ENCODE measurements at regions of chr5 and their contacts with region 1.

Region 1: GRCh38 chr5:111530298-111530740 is 18.0 kb upstream of the STARD4 start:
- DNase-seq: peak; percentile 22
- ATAC-seq: peak; percentile 55; the same call in 1 of the 2 replicates
- H3K4me3 ChIP-seq: no peak overlapping the region
- H3K27ac ChIP-seq: no peak overlapping the region
- H3K4me1 ChIP-seq: peaks cover 6% of the 10 kb centered on the region; the same call in 1 of the 2 replicates
- H3K27me3 ChIP-seq: 0 out of 2 replicates have a peak, but pooled peaks cover 4% of the 10 kb centered on the region
- CTCF ChIP-seq: no peak

Region 2: GRCh38 chr5:111367081-111367480 is 163.2 kb before region 1 on chr5:
- CTCF ChIA-PET with region 1: no interaction called
- POLR2A ChIA-PET with region 1: no interaction called
- intact Hi-C with region 1: no loop called
- DNase-seq: peak; percentile 68
- ATAC-seq: peak; percentile 92
- H3K4me3 ChIP-seq: no peak overlapping the region
- H3K27ac ChIP-seq: no peak overlapping the region
- H3K4me1 ChIP-seq: 0 out of 2 replicates have a peak, but pooled peaks cover 7% of the 10 kb centered on the region
- H3K27me3 ChIP-seq: peaks cover 20% of the 10 kb centered on the region; the same call in 1 of the 2 replicates
- CTCF ChIP-seq: no peak

Region 3: GRCh38 chr5:111486055-111486454 is 44.3 kb before region 1 on chr5:
- CTCF ChIA-PET with region 1: no interaction called
- POLR2A ChIA-PET with region 1: no interaction called
- intact Hi-C with region 1: no loop called
- DNase-seq: no peak
- ATAC-seq: no peak
- H3K4me3 ChIP-seq: no peak overlapping the region
- H3K27ac ChIP-seq: no peak overlapping the region
- H3K4me1 ChIP-seq: no peaks in the 10 kb centered on the region
- H3K27me3 ChIP-seq: no peaks in the 10 kb centered on the region
- CTCF ChIP-seq: no peak

Region 4: DNA sequence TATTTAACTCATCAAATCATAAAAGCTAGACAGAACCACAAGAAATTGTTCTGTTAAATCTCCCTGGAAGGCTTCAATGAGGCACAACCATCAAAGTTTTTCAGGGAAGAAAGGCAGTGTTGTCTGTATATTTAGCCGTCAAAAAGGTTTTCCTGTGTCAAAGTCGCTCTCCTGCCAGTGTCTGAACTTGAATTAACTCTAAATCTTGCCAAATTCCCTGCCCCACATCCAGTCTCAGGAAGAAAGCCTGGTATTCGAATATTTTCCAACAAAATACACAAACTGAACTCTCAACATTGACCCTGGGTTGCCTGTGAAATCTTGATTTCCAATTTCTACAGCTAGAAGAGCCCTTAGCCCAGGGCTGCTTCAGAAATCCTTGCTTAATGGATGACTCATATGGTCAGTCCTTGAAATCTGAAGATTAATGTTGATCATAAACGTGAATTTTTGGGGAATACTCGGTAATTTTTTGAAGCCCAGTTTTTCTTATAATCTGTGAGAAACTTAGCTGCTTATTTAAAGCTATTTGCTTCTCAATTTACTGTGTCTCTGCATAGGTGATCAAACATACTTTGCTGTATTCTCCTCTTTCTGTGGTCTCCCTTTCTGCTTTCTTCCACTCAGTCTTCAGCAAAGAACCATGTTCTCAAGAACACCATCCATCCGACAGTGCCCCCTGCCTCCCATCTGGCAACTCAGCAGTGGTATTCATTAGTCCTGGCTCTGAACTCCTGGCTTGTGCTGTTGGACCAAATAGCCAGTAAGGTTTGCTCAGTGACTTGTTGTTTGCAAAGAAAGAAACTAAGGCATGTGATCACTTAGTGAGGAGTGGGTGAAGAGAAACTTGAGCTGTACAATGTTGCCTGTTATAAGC is 167.8 kb after region 1 on chr5:
- CTCF ChIA-PET with region 1: interaction called, 10 read pairs
- POLR2A ChIA-PET with region 1: no interaction called
- intact Hi-C with region 1: no loop called
- DNase-seq: peak; percentile 18
- ATAC-seq: no peak
- H3K4me3 ChIP-seq: no peak overlapping the region
- H3K27ac ChIP-seq: no peak overlapping the region
- H3K4me1 ChIP-seq: peaks cover 32% of the 10 kb centered on the region
- H3K27me3 ChIP-seq: no peaks in the 10 kb centered on the region
- CTCF ChIP-seq: 0 out of 2 replicates have a peak, but pooled peaks have one; percentile 21

Region 5: DNA sequence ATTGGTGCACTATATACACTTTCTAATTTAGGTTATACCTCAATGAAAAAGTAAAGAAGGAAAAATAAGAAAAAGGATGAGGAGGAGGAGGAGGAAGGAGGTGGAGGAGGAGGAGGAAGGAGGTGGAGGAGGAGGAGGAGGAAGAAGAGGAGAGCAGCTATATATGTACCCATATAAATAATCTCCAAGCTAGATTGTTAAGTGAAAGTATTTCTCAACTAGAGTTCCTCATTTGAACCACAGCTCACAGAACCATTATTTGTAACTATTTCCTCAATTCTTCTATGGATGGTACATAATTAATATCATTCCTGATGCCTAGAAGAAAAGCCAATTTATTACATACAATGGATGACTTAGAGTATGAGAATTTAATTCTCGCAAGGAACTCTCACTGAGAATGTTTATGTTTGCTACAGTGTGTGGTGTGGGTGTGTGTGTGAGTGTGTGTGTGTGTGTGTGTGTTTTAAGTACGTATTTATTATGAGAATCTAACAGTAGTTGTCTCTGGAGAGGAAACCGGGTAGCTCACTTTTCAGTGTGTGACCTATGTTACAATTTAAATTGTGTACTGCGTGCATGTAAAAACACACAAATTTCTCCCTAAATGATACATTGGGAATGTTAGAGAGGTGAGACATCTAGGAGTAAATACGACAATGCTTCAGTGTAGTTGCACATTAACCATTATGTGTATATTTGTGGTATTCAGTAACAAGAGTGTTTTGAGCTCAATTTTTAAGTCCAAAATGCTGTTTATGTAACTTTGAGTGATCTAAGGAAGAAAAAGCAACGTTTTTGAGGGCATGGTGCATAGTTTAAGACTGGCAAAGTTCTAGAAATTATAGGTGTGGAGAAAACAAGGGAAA is 246.8 kb after region 1 on chr5:
- CTCF ChIA-PET with region 1: interaction called, 12 read pairs
- POLR2A ChIA-PET with region 1: no interaction called
- intact Hi-C with region 1: no loop called
- DNase-seq: no peak
- ATAC-seq: no peak
- H3K4me3 ChIP-seq: no peak overlapping the region
- H3K27ac ChIP-seq: no peak overlapping the region
- H3K4me1 ChIP-seq: peaks cover 17% of the 10 kb centered on the region
- H3K27me3 ChIP-seq: no peaks in the 10 kb centered on the region
- CTCF ChIP-seq: no peak

Region 6: GRCh38 chr5:111810112-111810511 is 279.8 kb after region 1 on chr5:
- CTCF ChIA-PET with region 1: interaction called, 12 read pairs
- POLR2A ChIA-PET with region 1: no interaction called
- intact Hi-C with region 1: no loop called
- DNase-seq: no peak
- ATAC-seq: no peak
- H3K4me3 ChIP-seq: no peak overlapping the region
- H3K27ac ChIP-seq: no peak overlapping the region
- H3K4me1 ChIP-seq: peaks cover 6% of the 10 kb centered on the region; the same call in 1 of the 2 replicates
- H3K27me3 ChIP-seq: no peaks in the 10 kb centered on the region
- CTCF ChIP-seq: no peak

Region 7: DNA sequence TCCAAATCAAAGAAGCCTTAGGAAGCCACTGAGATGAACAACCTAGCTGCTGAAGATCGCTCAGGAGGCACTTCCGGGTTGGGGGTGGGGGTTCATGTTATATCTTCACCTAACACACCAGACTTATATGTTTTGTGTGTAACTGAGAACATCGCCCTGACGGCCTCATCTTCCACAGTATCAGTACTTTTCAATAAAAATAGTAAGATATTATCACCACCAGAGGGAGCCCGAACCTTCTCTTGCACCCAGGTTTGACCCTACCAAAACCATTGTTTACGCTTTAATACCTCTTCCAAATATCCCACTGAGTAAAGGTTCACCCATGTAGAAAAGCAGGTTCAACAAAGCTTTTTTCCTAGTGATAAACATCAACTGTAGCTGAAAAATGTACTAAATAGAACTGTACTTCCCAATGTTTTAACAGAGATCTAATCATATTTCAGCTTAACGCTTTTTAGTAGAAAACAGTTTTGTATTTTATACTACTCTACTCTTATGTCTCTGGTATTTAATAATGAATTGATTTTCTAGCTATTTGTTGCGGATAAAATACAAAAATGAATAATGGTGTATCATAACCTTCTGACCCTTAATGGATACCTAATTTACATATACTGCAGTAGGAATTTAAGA is 644.8 kb after region 1 on chr5:
- CTCF ChIA-PET with region 1: no interaction called
- POLR2A ChIA-PET with region 1: interaction called, 19 read pairs
- intact Hi-C with region 1: no loop called
- DNase-seq: peak; percentile 67
- ATAC-seq: peak; percentile 80
- H3K4me3 ChIP-seq: peak overlapping the region; percentile 32; the same call in 1 of the 2 replicates
- H3K27ac ChIP-seq: no peak overlapping the region
- H3K4me1 ChIP-seq: peaks cover 7% of the 10 kb centered on the region
- H3K27me3 ChIP-seq: 0 out of 2 replicates have a peak, but pooled peaks cover 7% of the 10 kb centered on the region
- CTCF ChIP-seq: peak; percentile 83